GM13976 (cell line): ENCODE measurements at regions of chr4 and their contacts with region 1.

Region 1: GRCh38 chr4:146126131-146126530 is 49.4 kb upstream of the LSM6 start:
- DNase-seq: no peak
- CTCF ChIP-seq: no peak

Region 2: DNA sequence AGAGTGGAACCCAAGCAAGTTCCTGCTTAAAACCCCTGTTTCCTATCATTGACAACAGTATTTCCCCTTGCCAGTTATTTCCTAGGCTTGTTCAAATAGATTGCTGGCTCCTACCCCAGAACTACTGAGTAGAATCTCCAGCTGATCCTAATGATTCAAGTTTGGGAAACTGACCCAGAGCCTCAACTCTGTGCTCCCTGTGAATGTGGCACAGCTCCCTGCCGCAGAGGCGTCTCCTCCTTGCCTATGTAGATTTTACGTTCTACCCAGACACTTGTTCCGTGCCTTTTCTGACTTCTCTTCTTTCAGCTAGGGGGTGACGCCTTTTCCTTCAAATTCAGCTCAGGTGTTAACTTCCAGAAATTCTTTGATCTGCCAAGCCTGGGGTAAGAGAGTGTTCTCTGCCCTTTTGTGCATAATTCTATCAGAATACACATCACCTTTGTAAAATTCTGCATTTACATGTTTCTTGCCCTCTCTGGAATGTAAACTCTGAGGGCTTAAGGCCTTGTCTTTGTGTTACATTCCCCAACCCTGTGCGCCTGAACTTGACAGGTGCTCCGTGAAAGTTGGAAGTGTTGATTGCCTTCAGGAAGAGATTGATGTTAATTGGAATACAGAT is 53.8 kb after region 1 on chr4:
- in situ Hi-C with region 1: loop called (anchors 5 kb)
- DNase-seq: no peak
- CTCF ChIP-seq: no peak

Region 3: GRCh38 chr4:146283758-146284651 is 157.9 kb after region 1 on chr4:
- in situ Hi-C with region 1: no loop called
- DNase-seq: no peak
- CTCF ChIP-seq: no peak